Activated CD4-positive, alpha-beta memory T cell treated with anti-CD3 and anti-CD28 coated beads for 36 hours (primary cell): ENCODE measurements at regions of chr10 and their contacts with region 1.

Region 1: DNA sequence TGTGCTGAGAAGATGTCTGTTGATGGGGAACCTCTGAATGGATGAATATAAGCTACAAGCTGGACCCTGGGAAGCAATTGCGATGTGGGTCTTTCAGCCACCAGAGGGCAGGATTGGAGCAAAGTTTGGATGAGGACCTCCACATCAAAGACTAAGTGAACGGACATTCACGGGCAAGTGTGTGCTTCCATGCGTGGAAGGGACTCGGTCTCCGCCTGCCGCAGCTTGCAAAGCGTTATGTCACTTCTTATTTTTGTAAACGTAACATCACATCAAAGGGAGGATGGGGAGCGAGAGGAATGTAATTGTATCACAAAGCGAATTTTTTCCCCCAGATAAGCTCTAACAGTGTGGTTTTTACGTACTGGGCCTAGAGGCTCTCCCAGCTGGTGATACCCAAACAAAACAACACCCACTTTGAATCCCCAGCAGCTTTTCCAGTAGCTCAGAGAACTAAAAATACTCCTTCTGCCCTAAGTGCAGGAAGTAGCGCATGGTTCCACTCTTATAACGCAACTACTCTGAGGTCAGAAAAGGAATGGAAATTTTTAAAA is 65.0 kb downstream of the VWA2 start:
- DNase-seq: peak; percentile 85
- H3K4me3 Mint-ChIP-seq: peak overlapping the region; percentile 69
- H3K27ac Mint-ChIP-seq: peak overlapping the region; percentile 15
- H3K4me1 Mint-ChIP-seq: peaks cover 9% of the 10 kb centered on the region
- H3K27me3 Mint-ChIP-seq: no peaks in the 10 kb centered on the region

Region 2: DNA sequence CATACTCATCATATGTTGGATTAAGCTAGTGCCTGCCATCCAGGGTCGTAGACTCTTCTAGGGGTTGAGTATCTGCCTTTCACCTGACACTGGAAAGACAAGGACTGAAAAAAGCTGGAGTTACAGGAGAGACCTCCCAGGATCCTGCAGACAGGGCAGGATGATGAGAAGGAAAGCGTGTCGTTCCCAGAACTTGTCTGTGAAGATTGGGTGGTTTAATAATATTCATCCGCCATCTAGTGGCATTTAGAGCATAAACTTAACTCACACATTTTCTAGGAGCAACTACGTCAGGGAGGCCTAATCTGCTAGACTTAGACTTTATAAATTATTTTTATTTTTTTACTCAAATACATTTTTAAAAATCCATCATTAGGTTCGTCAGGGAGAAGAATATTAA is 200.8 kb before region 1 on chr10:
- CTCF ChIA-PET with region 1: no interaction called
- POLR2A ChIA-PET with region 1: no interaction called
- intact Hi-C with region 1: no loop called
- DNase-seq: no peak
- H3K4me3 Mint-ChIP-seq: no peak overlapping the region
- H3K27ac Mint-ChIP-seq: no peak overlapping the region
- H3K4me1 Mint-ChIP-seq: peaks cover 25% of the 10 kb centered on the region
- H3K27me3 Mint-ChIP-seq: peaks cover 26% of the 10 kb centered on the region

Region 3: DNA sequence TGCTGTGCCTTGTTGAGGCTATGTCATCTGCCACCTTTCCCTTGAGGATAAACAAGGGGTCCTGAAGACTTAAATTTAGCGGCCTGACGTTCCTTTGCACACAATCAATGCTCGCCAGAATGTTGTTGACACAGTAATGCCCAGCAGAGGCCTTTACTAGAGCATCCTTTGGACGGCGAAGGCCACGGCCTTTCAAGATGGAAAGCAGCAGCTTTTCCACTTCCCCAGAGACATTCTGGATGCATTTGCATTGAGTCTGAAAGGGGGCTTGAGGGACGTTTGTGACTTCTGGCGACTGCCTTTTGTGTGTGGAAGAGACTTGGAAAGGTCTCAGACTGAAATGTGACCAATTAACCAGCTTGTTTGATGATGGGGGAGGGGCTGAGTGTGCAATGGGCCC is 12.6 kb before region 1 on chr10:
- CTCF ChIA-PET with region 1: interaction called, 15 read pairs
- POLR2A ChIA-PET with region 1: no interaction called
- intact Hi-C with region 1: no loop called
- DNase-seq: no peak
- H3K4me3 Mint-ChIP-seq: no peak overlapping the region
- H3K27ac Mint-ChIP-seq: no peak overlapping the region
- H3K4me1 Mint-ChIP-seq: no peaks in the 10 kb centered on the region
- H3K27me3 Mint-ChIP-seq: no peaks in the 10 kb centered on the region

Region 4: DNA sequence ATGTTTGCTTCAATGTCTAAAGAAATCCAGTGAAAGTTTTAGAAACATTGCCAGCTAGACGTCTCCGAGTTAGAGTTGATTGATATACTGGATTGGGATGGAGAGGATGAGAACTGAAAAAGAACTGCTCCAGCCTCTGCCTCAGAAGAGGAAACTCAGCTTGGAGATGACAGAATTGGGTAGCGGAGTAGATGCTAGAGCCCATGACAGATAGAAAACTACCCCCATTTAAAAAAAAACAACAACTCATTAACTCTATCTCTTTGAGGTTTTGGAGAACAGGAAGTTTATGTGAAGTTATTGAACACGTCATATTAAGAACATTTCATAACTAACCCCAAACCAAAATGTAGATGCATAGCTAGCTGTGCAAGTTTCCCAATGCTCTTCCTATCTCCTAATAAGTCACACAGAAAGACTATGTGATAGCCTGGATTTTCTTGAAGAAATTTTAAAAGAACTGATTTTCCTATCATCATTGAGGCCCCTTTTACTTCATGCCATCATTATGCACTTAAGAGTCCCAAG is 128.5 kb after region 1 on chr10:
- CTCF ChIA-PET with region 1: interaction called, 19 read pairs
- POLR2A ChIA-PET with region 1: no interaction called
- intact Hi-C with region 1: no loop called
- DNase-seq: no peak
- H3K4me3 Mint-ChIP-seq: no peak overlapping the region
- H3K27ac Mint-ChIP-seq: no peak overlapping the region
- H3K4me1 Mint-ChIP-seq: no peaks in the 10 kb centered on the region
- H3K27me3 Mint-ChIP-seq: no peaks in the 10 kb centered on the region

Region 5: DNA sequence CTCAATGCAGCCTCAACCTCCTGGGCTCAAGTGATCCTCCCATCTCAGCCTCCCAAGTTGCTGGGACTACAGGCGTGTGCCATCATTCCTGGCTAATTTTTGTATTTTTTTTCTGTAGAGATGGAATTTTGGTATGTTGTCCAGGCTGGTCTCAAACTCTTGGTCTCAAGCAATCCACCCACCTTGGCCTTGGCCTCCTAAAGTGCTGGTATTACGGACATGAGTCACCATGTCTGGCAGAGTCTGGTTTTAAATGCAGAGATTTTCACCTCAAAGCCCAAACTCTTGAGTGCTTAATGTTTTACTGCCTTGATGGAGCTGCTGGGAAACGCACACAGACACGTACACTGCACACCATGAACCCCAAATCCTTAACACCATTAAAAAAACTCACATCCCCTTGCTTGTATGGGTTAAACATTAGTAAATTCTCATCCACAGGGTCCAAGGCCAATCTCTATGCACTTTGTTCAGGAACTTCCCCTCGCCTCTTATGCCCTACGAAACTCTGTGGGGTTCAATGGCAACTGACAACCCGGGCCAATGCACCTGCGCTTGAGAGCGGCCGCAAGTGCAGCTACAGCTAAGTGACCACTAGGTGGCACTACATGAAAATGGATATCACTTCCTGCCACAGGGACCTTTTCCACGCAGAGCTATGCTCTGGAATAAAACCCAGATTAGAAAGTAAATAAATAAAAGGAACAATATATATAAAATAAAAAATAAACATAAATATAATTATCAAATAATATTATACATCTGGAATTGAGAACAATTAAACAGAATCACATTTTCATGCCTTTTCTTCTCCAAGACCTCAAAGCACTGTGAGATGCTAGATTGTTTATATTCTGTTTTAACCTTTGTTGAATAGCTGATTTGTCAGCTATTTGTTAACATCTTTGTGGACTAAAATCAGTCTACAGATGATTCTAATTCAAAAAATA is 167.1 kb after region 1 on chr10:
- CTCF ChIA-PET with region 1: interaction called, 9 read pairs
- POLR2A ChIA-PET with region 1: no interaction called
- intact Hi-C with region 1: loop called (anchors 1 kb)
- DNase-seq: peak; percentile 73
- H3K4me3 Mint-ChIP-seq: no peak overlapping the region
- H3K27ac Mint-ChIP-seq: no peak overlapping the region
- H3K4me1 Mint-ChIP-seq: peaks cover 10% of the 10 kb centered on the region
- H3K27me3 Mint-ChIP-seq: no peaks in the 10 kb centered on the region

Region 6: GRCh38 chr10:114703377-114704107 is 399.4 kb after region 1 on chr10:
- CTCF ChIA-PET with region 1: interaction called, 21 read pairs
- POLR2A ChIA-PET with region 1: no interaction called
- intact Hi-C with region 1: loop called (anchors 1 kb)
- DNase-seq: no peak
- H3K4me3 Mint-ChIP-seq: no peak overlapping the region
- H3K27ac Mint-ChIP-seq: no peak overlapping the region
- H3K4me1 Mint-ChIP-seq: no peaks in the 10 kb centered on the region
- H3K27me3 Mint-ChIP-seq: peaks cover 7% of the 10 kb centered on the region